ENCODE measurements at regions of chr2 and their contacts with region 1.

Region 1: DNA sequence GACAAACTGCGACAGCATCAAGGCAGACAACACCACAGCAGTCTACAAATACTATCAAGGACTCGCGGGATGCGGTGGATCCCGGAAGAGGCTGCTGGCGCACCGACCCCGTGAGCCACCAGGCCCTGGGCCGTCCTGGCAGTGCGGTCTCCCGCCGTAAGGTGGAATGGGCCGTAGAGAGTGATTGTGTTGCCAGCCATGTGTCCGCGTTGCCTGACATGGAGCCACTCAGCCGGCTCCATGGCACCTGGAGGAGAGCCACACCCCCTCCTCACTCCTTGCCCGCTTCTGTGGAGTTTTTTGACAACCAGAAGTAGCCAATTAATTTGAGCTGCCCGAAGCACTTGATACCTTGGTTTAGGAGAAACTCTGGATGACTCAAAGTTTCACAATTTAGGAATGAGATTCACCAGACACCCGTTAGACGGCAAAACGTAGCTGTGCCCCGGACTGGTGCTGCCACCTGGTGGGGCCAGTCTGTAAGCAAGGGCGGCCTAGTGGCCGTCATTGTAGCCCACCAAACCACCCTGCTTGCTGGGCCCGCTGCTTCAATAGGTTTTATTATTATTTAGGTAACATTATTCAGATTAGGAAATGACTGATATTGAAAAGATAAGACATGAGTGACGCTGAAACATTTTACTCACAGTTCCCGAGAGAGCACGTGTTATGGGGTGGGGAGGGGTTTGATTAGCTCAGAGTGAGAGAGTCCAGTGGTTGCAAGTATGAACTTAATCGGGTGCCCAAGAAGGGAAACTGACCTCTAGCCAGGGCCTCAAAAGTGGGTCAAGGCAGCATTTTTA is 10.2 kb upstream of the IMP4 start:
- DNase-seq: peak; percentile 79
- H3K4me3 ChIP-seq: no peak overlapping the region
- H3K27ac ChIP-seq: no peak overlapping the region
- H3K4me1 ChIP-seq: peaks cover 3 to 8% (median 3%) of the 10 kb centered on the region in 4 donors
- H3K27me3 ChIP-seq: peaks cover 36% of the 10 kb centered on the region
- CTCF ChIP-seq: peak; percentile 91 to 96 (median 94)
- EP300 ChIP-seq: no peak
- POLR2A ChIP-seq: no peak

Region 2: DNA sequence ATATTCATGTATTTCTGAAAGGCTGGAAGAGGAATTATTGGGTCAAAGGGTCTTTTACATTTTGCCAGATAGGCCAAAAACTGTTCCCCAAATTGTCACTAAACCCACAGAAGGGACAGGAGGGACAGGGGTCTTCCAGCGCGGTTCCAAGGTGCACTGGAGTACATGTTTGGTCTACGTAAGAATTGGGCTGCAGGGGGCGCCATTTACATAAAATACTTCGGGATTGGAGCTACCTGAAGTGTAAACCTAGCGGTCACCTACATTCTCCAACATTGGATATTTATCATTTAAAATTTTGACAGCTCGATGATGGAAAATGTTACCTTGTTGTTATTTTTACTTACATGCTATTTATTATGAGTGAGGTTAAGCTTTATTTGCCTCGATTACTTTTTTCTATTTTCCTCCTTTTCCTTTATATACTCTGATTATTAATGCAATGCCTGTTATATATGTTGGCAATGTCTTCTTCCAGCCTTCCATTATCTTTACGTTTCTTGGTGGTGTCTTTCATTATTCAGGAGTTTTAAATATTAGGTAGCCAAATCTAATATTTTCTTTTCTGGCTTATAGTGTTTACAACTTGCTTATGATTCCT is 396.0 kb before region 1 on chr2:
- in situ Hi-C with region 1: loop called in 2 of 4 experiments (anchors 10 to 25 kb)
- intact Hi-C with region 1: loop called (anchors 10 kb)
- DNase-seq: peak; percentile 52
- H3K4me3 ChIP-seq: no peak overlapping the region
- H3K27ac ChIP-seq: no peak overlapping the region
- H3K4me1 ChIP-seq: no peaks in the 10 kb centered on the region
- H3K27me3 ChIP-seq: peaks cover 31% of the 10 kb centered on the region
- CTCF ChIP-seq: peak in 3 of 5 experiments; percentile 34 to 44 (median 39)
- EP300 ChIP-seq: no peak
- POLR2A ChIP-seq: no peak

Region 3: DNA sequence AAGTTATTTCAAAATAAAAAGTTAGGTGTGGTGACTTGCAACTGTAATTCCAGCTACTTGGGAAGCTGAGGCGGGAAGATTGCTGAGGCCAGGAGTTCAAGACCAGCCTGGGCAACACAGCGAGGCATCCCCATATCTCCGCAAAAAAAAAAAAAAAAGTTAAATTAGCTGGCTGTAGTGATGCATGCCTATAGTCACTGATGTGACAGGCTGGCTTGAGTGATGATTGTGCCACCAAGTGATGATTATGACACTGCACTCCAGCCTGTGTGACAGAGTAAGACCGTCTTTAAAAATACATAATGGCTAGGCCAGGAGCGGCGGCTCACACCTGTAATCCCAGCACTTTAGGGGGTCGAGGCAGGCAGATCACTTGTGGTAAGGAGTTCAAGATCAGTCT is 162.6 kb before region 1 on chr2:
- in situ Hi-C with region 1: loop called in 3 of 4 experiments (anchors 10 to 25 kb)
- intact Hi-C with region 1: no loop called
- DNase-seq: no peak
- H3K4me3 ChIP-seq: no peak overlapping the region
- H3K27ac ChIP-seq: no peak overlapping the region
- H3K4me1 ChIP-seq: no peaks in the 10 kb centered on the region
- H3K27me3 ChIP-seq: no peaks in the 10 kb centered on the region
- CTCF ChIP-seq: no peak
- EP300 ChIP-seq: no peak
- POLR2A ChIP-seq: no peak

Region 4: DNA sequence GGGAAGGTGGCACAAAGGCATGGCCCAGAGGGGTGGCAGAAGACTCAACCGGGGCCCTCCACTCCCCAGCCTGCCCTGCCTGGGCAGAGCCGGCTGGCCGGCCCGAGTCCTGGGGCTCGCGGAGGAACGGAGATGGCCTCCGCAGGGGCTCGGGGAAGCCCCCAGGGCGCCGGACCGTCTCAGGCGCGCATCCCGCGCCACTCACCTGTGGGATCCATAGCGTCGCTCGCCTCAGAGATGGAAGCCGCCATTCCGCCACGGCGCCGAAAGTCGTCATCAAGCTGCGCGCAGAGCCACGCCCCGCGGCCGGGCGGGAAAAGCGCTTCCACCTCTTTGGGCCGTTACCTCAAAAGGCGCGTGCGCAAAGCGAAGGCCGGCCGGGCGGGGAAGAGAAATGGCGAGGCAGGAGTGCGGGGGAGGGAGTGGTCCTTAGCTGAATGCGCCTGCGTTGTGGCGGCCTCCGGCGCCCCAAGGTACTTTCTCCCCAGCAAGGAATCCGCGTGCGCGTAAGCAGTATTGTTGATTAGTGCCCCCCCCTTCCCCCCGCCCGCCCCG is 151.1 kb before region 1 on chr2 and contains the start of gene SMPD4:
- in situ Hi-C with region 1: loop called in 2 of 4 experiments (anchors 10 kb)
- intact Hi-C with region 1: loop called (anchors 10 kb)
- DNase-seq: peak; percentile 98
- H3K4me3 ChIP-seq: peak within 1 kb of the TSS; percentile 83 to 98 (median 94)
- H3K27ac ChIP-seq: peak within 1 kb of the TSS; percentile 87 to 97 (median 93)
- H3K4me1 ChIP-seq: peaks cover 15 to 23% (median 22%) of the 10 kb centered on the region in 4 donors
- H3K27me3 ChIP-seq: no peaks in the 10 kb centered on the region
- CTCF ChIP-seq: no peak
- EP300 ChIP-seq: no peak
- POLR2A ChIP-seq: peak; percentile 55
- total RNA-seq, gene SMPD4: 29.1 to 110 (median 52.8) TPM

Measured in transverse colon (tissue), 4 donors.